Vagina (tissue), 2 donors: ENCODE measurements at regions of chr6 and their contacts with region 1.

Region 1: DNA sequence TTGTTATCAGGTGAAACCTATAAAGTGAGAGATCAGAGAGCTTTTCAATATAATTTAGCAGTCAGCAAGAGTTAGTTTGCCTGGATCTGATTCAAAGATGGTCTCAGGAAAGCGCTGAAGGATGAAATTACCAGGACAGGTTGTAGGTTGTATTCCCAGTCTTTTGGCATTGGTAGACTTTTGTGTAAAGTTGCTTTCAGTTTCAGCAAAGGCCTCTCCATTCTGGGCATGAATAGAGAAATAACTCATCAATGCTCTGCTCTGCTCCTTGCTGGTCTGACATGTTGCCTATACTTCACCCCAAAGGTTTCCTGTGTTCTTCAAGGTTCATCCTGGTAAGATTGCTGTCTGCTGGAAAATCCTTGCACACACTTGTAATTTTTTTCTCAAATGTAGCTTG is 714.8 kb downstream of the EPM2A start:
- DNase-seq: no peak
- H3K4me3 ChIP-seq: no peak overlapping the region
- H3K27ac ChIP-seq: no peak overlapping the region
- H3K4me1 ChIP-seq: no peaks in the 10 kb centered on the region
- H3K27me3 ChIP-seq: no peaks in the 10 kb centered on the region
- CTCF ChIP-seq: no peak
- POLR2A ChIP-seq: no peak

Region 2: DNA sequence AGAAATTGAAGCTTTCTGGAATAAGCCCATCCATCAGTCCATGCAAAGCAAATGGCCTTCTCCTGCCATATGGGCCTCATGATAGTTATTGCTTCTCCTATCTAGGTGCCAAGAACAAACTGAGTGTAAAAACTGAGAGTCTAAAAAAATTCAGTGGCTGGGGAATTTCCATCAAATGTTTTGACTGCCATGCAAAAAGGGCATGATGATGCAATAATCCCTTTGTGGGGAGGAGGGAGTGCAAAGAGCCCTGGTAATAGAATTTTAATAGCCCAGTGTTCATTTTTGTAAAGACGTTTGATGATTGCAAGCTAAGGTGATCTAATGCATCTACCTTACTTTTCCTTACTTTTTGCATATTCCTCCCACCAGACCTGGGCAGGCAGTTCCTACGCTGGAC is 31.1 kb after region 1 on chr6:
- intact Hi-C with region 1: loop called (anchors 2 kb)
- DNase-seq: no peak
- H3K4me3 ChIP-seq: no peak overlapping the region
- H3K27ac ChIP-seq: no peak overlapping the region
- H3K4me1 ChIP-seq: no peaks in the 10 kb centered on the region
- H3K27me3 ChIP-seq: no peaks in the 10 kb centered on the region
- CTCF ChIP-seq: no peak
- POLR2A ChIP-seq: no peak